ENCODE measurements at regions of chrX and their contacts with region 1.

Region 1: GRCh38 chrX:63441717-63442116 is 90.6 kb upstream of the SPIN4 start:
- DNase-seq: no peak
- ATAC-seq: no peak
- H3K4me3 ChIP-seq: no peak overlapping the region
- H3K4me3 Mint-ChIP-seq: no peak overlapping the region
- H3K27ac ChIP-seq: no peak overlapping the region
- H3K27ac Mint-ChIP-seq: no peak overlapping the region
- H3K4me1 ChIP-seq: no peaks in the 10 kb centered on the region
- H3K4me1 Mint-ChIP-seq: peaks cover 0 to 15% (median 0%) of the 10 kb centered on the region in 7 donors
- H3K27me3 ChIP-seq: no peaks in the 10 kb centered on the region
- H3K27me3 Mint-ChIP-seq: no peaks in the 10 kb centered on the region

Region 2: DNA sequence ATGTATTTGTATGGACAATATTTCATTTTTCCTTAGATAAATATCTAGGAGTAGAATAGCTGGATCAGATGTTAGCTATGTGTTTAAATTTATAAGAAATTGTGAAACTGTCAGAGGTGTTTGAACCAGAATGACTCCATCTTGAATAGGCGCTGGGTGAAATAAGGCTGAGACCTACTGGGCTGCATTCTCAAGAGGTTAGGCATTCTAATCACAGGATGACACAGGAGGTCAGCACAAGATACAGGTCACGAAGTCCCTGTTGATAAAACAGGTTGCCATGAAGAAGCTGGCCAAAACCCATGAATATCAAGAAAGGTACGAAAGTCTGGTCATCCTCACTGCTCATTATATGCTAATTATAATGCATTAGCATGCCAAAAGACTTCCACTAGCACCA is 54.3 kb before region 1 on chrX:
- CTCF ChIA-PET with region 1: no interaction called
- POLR2A ChIA-PET with region 1: no interaction called
- intact Hi-C with region 1: loop called in 1 of 2 experiments (anchors 10 kb)
- DNase-seq: no peak
- ATAC-seq: no peak
- H3K4me3 ChIP-seq: no peak overlapping the region
- H3K4me3 Mint-ChIP-seq: no peak overlapping the region
- H3K27ac ChIP-seq: no peak overlapping the region
- H3K27ac Mint-ChIP-seq: no peak overlapping the region
- H3K4me1 ChIP-seq: no peaks in the 10 kb centered on the region
- H3K4me1 Mint-ChIP-seq: no peaks in the 10 kb centered on the region
- H3K27me3 ChIP-seq: no peaks in the 10 kb centered on the region
- H3K27me3 Mint-ChIP-seq: no peaks in the 10 kb centered on the region

Region 3: DNA sequence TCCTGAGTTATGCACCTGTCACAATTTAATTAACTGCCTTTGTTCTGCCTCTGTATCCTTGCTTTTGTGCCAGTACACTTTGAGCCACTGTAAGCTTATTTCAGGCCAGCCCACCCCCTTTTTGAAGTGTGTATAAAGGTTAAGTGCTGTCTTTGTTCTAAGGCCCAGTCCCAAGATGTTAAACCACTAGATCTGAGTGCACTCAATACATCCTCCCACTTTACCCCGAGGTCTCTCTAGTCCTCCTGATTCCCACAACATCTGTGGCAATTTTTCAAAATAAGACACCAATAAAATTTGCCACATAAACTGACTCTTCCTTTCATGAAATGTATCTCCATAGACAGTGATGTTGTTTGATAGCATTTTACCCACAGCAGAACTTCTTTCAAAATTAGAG is 33.5 kb after region 1 on chrX:
- CTCF ChIA-PET with region 1: no interaction called
- POLR2A ChIA-PET with region 1: no interaction called
- intact Hi-C with region 1: no loop called
- DNase-seq: no peak
- ATAC-seq: no peak
- H3K4me3 ChIP-seq: no peak overlapping the region
- H3K4me3 Mint-ChIP-seq: no peak overlapping the region
- H3K27ac ChIP-seq: no peak overlapping the region
- H3K27ac Mint-ChIP-seq: no peak overlapping the region
- H3K4me1 ChIP-seq: no peaks in the 10 kb centered on the region
- H3K4me1 Mint-ChIP-seq: peaks cover 0 to 6% (median 0%) of the 10 kb centered on the region in 7 donors
- H3K27me3 ChIP-seq: no peaks in the 10 kb centered on the region
- H3K27me3 Mint-ChIP-seq: no peaks in the 10 kb centered on the region

Region 4: DNA sequence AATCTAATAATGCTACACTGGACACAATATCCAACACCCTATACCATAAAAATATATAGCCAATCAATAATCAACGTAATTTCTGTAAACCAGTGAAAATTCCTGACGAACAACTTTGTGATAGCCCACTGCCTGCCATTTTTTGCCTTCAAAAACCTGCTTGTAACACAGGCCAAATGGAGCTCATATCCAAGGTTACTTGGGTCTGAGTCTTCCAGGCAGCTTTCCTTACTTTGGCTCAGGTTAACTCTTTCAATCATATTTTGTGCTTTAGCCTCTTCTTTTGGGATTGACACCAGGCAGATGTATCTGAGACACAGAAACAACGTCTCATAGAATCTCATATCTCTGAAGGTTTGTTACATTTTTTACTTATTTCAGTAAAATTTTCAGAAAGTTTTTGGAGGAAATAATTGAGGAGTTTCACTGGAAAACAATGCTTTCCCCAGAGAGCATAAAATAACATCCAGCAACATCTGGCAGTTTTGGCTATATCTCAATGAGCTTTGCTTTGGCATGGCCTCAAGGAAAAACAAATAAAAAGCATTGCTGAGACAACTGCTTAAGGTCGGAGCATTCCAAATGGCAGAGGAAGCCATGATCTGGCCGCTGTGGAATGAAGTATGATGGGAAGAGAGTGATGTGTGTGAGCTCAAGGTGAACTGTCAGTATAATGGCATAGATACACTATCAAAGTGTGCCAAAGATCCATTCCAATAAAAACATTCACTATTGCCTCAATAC is 72.3 kb after region 1 on chrX:
- CTCF ChIA-PET with region 1: no interaction called
- POLR2A ChIA-PET with region 1: no interaction called
- intact Hi-C with region 1: no loop called
- DNase-seq: no peak
- ATAC-seq: no peak
- H3K4me3 ChIP-seq: no peak overlapping the region
- H3K4me3 Mint-ChIP-seq: no peak overlapping the region
- H3K27ac ChIP-seq: no peak overlapping the region
- H3K27ac Mint-ChIP-seq: no peak overlapping the region
- H3K4me1 ChIP-seq: no peaks in the 10 kb centered on the region
- H3K4me1 Mint-ChIP-seq: peaks cover 0 to 32% (median 8%) of the 10 kb centered on the region in 7 donors
- H3K27me3 ChIP-seq: no peaks in the 10 kb centered on the region
- H3K27me3 Mint-ChIP-seq: no peaks in the 10 kb centered on the region

Measured in naive thymus-derived CD4-positive, alpha-beta T cell (primary cell).